Sciatic nerve (tissue), 2 donors: ENCODE measurements at regions of chr7 and their contacts with region 1.

Region 1: DNA sequence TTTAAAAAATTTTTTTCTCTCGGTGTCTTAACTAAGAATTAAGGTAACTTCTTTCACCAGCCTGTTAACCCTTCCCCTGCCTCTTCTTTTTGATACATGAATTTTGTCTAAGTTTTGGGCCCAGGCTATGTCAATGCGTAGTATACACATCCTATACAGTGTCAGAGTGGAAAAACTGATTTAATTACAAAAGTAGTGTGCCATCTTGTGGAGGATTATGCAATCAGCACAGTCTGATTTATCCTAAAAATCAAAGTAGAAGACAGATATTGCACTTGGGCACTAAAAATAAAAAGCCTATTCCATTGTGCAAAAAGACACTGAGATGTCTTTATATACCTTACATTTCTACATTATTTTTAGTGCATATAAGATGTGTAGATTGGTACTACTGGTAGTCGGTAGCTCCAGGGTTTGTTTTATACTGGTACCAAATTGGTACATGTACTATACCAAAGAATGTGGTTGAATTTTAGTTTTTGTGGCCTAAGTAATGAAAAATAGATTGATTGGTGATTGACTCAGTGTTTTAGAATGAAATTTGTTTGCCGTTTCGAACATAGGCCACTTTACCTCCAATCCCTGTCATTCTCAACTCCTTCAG is 96.6 kb downstream of the MKLN1 start:
- DNase-seq: no peak
- ATAC-seq: peak; percentile 47

Region 2: DNA sequence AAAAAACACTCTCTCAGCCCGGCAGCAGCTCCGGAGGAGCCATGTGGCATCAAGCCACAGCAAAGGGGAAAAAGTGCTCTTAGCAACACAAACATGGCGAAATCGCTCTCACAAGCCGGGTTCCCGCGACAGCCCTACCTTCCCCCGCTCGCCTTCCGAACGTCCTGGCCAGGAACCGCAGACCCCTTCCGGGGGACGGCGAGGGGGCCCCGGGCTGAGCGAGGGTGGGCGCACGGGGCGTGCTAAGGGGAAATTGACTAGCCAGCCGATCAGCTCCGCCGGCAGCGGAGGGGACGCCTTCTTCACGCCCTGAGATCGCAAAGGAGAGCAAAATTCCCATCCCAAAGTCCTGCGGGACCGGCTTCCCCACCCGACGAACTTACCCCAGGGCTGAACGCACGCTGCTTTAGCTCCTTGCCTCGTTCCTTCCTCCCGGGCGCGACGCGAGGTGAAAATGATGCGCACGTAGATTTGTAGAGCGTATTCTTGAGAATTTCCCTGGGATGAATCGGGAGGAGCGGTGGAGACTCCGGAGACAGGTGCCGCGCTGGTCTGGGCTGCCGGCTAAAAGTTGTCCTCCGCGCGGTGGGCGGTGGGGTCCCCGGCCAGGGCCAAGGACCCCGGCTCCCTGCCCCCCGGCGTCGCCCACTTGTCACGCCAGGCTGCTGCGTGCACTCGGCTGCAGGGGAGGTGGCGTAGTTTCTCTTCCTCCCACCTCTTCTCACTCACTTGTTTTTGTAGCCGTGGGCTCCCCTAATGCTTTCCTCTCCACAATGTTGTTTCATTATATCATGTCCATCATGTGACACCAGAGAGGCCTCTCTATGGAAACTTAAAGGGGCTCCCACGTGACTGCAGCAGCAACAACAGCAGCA is 316.7 kb before region 1 on chr7:
- intact Hi-C with region 1: loop called (anchors 5 kb)
- DNase-seq: peak; percentile 85
- ATAC-seq: peak; percentile 69

Region 3: DNA sequence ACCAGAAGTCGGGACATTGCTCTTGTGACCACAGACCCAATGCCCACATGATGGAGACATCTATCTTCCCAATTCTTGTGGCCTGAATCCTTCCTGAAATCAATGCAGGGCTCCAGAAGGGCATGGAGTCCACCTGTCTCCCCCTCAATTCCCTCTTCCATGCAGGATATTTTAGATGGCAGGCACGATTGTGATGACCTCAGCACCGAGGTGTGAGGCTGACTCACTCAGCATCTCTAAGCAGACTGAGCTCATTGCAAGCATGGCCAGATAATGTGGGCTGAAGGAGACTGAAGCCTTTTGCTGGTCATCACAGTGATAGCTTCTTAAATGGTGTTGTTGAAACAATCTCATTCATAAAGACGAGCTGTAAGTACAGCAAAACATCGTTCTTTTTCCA is 507.0 kb after region 1 on chr7:
- intact Hi-C with region 1: no loop called
- DNase-seq: no peak
- ATAC-seq: no peak